Activated naive CD4-positive, alpha-beta T cell treated with anti-CD3 and anti-CD28 coated beads for 36 hours (primary cell): ENCODE measurements at regions of chr11 and their contacts with region 1.

Region 1: GRCh38 chr11:61516675-61517572 is 8.4 kb downstream of the LRRC10B start:
- DNase-seq: peak; percentile 53
- H3K4me3 Mint-ChIP-seq: peak overlapping the region; percentile 32
- H3K27ac Mint-ChIP-seq: no peak overlapping the region
- H3K4me1 Mint-ChIP-seq: peaks cover 7% of the 10 kb centered on the region
- H3K27me3 Mint-ChIP-seq: peaks cover 19% of the 10 kb centered on the region

Region 2: DNA sequence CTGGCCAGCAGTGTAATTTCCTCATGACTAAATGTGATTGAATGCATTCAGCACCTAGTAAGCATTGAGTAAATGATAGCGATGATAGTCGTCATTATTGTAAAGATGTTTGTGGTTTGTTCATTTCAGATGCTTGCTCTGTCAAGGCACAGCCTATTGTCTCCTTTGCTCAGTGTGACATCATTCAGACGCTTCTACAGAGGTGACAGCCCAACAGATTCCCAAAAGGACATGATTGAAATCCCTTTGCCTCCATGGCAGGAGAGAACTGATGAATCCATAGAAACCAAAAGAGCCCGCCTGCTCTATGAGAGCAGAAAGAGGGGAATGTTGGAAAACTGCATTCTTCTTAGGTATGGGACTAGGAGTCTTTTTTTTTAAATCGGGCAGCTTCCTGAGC is 79.4 kb before region 1 on chr11:
- CTCF ChIA-PET with region 1: interaction called, 18 read pairs
- intact Hi-C with region 1: no loop called
- DNase-seq: no peak
- H3K4me3 Mint-ChIP-seq: no peak overlapping the region
- H3K27ac Mint-ChIP-seq: peak overlapping the region; percentile 5
- H3K4me1 Mint-ChIP-seq: peaks cover 29% of the 10 kb centered on the region
- H3K27me3 Mint-ChIP-seq: no peaks in the 10 kb centered on the region

Region 3: GRCh38 chr11:61477727-61478148 is 39.2 kb before region 1 on chr11:
- CTCF ChIA-PET with region 1: interaction called, 152 read pairs
- intact Hi-C with region 1: loop called (anchors 1 kb)
- DNase-seq: peak; percentile 57
- H3K4me3 Mint-ChIP-seq: no peak overlapping the region
- H3K27ac Mint-ChIP-seq: no peak overlapping the region
- H3K4me1 Mint-ChIP-seq: peaks cover 10% of the 10 kb centered on the region
- H3K27me3 Mint-ChIP-seq: peaks cover 2% of the 10 kb centered on the region

Region 4: DNA sequence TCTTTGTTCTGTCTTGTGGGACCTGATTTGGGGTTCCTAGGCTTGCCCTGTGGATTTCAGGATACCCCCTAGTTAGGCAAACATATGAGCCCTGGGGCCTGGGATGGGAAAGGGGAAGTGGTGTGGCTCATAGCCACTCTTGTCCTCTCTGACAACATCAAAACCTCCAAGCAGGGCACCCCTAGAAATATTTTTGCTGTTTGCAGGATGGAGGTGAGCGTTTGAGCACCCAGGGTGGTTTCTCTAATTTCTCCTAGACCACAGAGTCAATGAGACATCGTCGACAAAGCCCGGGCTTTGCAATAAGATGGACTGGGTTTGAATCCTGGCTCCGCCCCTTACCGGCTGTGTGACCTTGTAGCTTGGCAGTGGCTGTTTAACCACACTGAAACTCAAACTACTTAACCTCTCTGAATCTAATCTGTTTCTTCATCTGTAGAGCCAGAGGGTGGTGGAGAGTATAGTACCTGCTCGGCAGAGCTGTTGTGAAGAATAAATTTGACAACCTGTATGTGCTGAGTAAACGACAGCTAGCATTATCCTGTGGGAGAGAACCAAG is 13.6 kb before region 1 on chr11:
- CTCF ChIA-PET with region 1: interaction called, 13 read pairs
- intact Hi-C with region 1: no loop called
- DNase-seq: no peak
- H3K4me3 Mint-ChIP-seq: no peak overlapping the region
- H3K27ac Mint-ChIP-seq: no peak overlapping the region
- H3K4me1 Mint-ChIP-seq: peaks cover 6% of the 10 kb centered on the region
- H3K27me3 Mint-ChIP-seq: peaks cover 24% of the 10 kb centered on the region

Region 5: DNA sequence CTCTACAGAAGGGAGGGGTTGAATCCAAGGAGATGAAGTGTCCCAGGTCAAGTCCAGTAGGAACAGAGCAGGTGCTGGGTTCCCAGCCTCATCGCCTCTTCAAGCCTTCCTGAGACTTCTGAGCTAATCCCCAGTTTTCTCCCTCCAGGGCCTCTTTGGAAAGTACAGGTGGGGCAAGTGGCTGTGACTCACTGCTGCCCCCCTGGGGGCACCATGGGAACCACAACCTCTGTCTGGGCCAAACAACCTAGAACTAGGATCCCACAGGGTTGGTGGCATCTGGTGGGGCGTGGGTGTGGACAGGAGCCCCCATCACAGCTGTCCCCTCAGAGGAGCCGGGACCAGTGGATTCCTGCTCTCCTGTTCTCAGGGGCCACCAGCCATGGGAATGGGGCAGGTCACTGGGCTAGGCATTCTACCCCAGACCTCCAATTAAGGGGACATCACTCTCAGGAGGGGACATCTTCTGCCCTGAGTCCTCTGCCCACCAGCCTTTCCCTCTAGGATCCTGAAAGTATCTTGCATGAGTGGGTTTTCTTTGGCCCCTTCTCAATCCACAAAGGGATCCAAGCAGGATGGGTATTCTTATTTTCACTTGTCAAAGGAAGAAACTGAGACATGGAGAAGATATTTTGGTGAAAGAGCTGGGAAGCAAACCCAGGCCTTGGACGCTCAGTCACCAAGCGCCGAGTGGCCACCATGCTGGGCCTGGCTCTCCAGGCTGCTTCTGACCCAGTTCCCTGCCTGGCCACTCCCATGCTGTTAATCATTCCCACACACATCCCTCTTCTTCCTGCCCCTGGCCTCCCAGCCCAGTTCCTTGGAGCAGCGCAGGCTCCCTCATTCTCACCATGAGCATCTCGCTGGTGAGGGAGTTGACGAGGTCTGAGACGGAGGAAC is 15.5 kb after region 1 on chr11:
- CTCF ChIA-PET with region 1: interaction called, 17 read pairs
- intact Hi-C with region 1: no loop called
- DNase-seq: peak; percentile 59
- H3K4me3 Mint-ChIP-seq: no peak overlapping the region
- H3K27ac Mint-ChIP-seq: no peak overlapping the region
- H3K4me1 Mint-ChIP-seq: no peaks in the 10 kb centered on the region
- H3K27me3 Mint-ChIP-seq: peaks cover 5% of the 10 kb centered on the region